ENCODE measurements at regions of chr6 and their contacts with region 1.

Region 1: GRCh38 chr6:56955171-56956045 is 501 bp downstream of the BEND6 start:
- DNase-seq: peak; percentile 62
- H3K4me3 Mint-ChIP-seq: peak overlapping the region; percentile 84
- H3K27ac Mint-ChIP-seq: peak overlapping the region; percentile 70
- H3K4me1 Mint-ChIP-seq: peaks cover 19% of the 10 kb centered on the region
- H3K27me3 Mint-ChIP-seq: peaks cover 57% of the 10 kb centered on the region

Region 2: DNA sequence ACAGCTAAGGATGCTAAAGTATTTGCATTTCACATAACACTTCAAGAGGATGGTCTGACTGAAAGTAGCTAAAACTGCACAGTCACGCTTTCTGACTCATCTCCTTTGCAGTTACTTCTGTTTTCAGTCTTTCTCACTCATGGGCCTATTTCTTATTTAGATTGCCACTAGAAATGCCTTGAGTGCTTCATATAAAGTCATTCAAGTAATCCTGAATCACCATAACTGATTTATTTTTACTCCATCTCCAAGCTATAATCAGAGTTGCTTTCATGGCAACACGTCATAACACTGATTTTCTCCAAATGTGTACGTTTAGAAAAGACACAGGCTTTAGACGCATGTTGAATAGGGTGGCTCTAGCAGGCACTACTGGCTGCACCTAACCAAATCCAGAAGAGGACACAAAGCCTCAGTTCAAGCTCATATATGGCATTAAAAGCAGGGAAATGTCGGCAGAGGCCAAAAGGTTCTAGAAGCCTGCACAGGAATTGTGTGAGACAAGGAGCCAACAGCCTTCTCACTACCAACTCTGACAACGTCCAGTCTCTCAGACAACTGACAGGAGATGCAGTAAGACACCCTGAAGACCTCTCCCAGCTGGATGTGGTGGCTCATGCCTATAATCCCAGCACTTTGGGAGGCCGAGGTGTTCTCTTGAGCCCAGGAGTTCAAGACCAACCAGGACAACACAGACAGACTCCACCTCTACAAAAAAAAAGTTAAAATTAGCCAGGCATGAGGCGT is 64.6 kb before region 1 on chr6:
- intact Hi-C with region 1: loop called (anchors 2 kb)
- DNase-seq: peak; percentile 5
- H3K4me3 Mint-ChIP-seq: no peak overlapping the region
- H3K27ac Mint-ChIP-seq: peak overlapping the region; percentile 53
- H3K4me1 Mint-ChIP-seq: peaks cover 35% of the 10 kb centered on the region
- H3K27me3 Mint-ChIP-seq: no peaks in the 10 kb centered on the region

Region 3: DNA sequence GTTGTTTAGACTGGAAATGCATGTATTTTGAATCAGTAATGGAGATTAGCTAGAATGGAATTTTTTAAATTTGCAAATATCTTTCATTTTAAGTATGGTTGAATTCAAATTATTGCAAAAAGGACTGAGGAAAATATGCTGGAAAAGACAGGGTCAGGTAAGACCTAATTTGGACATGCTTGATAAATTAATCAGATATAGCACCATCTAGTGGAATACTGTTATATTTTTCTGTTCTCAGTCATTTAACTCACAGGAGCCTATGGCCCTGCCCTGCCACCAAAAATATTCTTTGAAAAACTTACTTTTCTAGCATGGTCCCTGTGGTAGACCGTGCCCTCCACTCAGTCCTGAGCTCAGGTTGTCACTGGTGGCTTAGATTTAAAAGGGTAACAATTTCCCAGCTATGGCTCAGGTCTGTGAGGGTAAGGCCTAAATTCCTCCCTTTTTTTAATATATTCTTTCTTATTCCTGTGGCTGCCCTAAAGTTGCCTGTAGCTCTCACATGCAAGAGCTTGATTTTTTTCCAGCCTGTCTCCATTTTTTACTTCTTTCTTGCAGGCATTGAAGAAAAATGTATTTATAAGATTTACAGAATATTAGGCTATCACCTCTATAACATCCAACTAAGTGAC is 65.8 kb after region 1 on chr6:
- intact Hi-C with region 1: loop called (anchors 1 kb)
- DNase-seq: no peak
- H3K4me3 Mint-ChIP-seq: no peak overlapping the region
- H3K27ac Mint-ChIP-seq: no peak overlapping the region
- H3K4me1 Mint-ChIP-seq: no peaks in the 10 kb centered on the region
- H3K27me3 Mint-ChIP-seq: peaks cover 14% of the 10 kb centered on the region

Region 4: GRCh38 chr6:57089687-57090460 is 134.5 kb after region 1 on chr6 and contains the start of gene ZNF451:
- intact Hi-C with region 1: loop called (anchors 1 kb)
- DNase-seq: peak; percentile 95
- H3K4me3 Mint-ChIP-seq: peak within 1 kb of the TSS; percentile 88
- H3K27ac Mint-ChIP-seq: peak within 1 kb of the TSS; percentile 72
- H3K4me1 Mint-ChIP-seq: peaks cover 35% of the 10 kb centered on the region
- H3K27me3 Mint-ChIP-seq: no peaks in the 10 kb centered on the region
- total RNA-seq, gene ZNF451: 58.1 and 64.4 TPM in 2 replicates